HEK293 (cell line): ENCODE measurements at regions of chr11 and their contacts with region 1.

Region 1: DNA sequence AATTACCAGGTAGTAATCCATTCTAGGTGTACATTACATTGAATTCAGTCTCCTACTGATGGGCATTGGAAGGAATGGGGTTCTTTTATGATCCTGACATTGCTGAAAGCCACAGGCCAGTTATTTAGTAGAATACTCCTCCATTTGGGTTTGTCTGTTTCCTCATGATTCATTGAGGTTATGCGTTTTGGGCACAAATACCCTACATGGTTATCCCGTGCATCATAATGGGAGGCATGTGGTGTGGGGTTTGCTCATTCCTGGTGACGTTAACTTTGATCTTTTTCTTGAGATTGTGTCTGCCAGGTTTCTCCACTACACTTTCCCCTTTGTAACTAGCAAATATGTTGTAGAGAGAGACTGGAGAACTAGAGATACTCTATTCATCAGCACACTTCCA is 5.5 kb downstream of the FOLR3 start:
- H3K4me3 ChIP-seq: no peak overlapping the region
- H3K27ac ChIP-seq: no peak overlapping the region
- H3K4me1 ChIP-seq: no peaks in the 10 kb centered on the region
- CTCF ChIP-seq: no peak

Region 2: GRCh38 chr11:72102946-72103753 is 37.9 kb before region 1 on chr11 and contains the start of gene LAMTOR1:
- CTCF ChIA-PET with region 1: interaction called, 10 read pairs
- POLR2A ChIA-PET with region 1: no interaction called
- H3K4me3 ChIP-seq: peak within 1 kb of the TSS; percentile 87
- H3K27ac ChIP-seq: peak within 1 kb of the TSS; percentile 75
- H3K4me1 ChIP-seq: no peaks in the 10 kb centered on the region
- CTCF ChIP-seq: peak; percentile 45; the same call in 1 of the 2 replicates

Region 3: DNA sequence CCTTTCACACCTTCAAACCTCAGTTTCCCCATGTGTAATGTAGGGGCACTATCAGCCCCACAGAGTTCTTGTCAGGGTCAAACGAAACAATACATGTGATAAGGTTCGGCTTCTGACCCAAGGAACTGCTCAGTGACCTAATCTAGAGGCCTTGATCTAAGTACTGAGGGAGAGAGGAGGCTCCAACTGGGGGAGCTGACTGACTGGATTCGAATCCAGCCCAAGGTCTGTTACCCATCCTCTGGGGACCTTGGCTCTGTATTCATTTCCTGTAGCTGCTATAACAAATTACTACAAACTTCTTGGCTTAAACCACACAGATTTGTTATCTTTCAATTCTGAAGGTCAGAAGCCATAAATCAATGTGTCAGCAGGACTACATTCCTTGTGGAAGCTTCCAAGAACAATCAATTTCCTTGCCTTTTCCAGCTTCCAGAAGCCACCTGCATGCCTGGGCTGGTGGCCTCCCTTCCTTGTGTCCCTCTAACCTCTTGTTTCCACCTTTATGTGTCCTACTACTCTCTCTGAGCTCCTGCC is 17.9 kb before region 1 on chr11:
- CTCF ChIA-PET with region 1: interaction called, 19 read pairs
- POLR2A ChIA-PET with region 1: no interaction called
- H3K4me3 ChIP-seq: no peak overlapping the region
- H3K27ac ChIP-seq: no peak overlapping the region
- H3K4me1 ChIP-seq: no peaks in the 10 kb centered on the region
- CTCF ChIP-seq: no peak

Region 4: DNA sequence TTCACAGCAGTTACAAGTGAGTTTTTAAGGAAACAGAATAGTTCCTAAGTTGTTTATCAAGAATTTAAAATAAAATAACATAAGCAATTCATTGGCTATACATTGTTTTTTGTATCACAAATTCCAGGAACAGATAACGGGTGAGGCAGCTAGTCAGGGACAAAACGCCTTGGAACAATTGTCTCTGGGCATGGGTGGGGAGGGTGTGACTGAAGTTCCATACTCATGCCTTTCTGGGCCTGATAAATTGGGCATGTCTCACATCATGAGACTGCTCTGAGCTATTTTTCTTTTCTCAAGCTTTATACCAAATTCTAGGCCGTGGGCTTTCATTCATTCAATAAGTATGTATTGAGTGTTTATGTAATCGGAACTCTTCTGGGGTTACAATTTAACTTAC is 16.1 kb after region 1 on chr11:
- CTCF ChIA-PET with region 1: interaction called, 28 read pairs
- POLR2A ChIA-PET with region 1: no interaction called
- H3K4me3 ChIP-seq: no peak overlapping the region
- H3K27ac ChIP-seq: no peak overlapping the region
- H3K4me1 ChIP-seq: no peaks in the 10 kb centered on the region
- CTCF ChIP-seq: no peak

Region 5: DNA sequence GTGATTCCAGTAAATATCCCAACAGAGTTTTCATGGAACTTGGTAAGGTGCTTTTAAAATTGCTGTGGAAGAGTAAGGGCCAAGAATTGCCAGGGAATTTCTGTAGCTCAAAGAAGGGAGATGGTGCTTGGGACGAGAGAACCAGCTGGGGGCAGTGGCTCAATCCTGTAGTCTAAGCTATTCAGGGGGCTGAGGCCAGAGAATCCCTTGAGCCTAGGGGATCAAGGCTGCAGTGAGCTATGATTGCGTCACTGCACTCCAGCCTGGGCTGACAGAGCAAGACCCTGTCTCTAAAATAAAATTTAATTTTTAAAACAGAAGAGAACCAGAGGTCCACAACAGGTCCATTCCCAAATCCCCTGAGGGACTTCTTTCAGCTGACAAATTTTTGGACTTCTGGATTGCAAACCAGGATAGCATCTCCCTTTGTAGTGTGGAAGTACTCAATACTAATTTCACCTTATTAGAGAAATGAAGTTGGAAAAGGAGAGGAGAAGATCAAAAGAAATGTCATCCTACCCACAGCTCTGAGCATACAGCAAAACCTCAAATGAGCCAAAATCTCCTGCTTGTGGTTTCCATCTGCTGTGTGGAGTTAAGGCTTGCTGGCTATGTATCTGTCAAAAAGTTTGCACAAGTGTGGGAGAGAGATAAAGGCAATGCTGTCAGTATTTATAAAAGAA is 352.5 kb after region 1 on chr11:
- CTCF ChIA-PET with region 1: no interaction called
- POLR2A ChIA-PET with region 1: no interaction called
- H3K4me3 ChIP-seq: no peak overlapping the region
- H3K27ac ChIP-seq: no peak overlapping the region
- H3K4me1 ChIP-seq: no peaks in the 10 kb centered on the region
- CTCF ChIP-seq: no peak